GM13976 (cell line): ENCODE measurements at regions of chr7 and their contacts with region 1.

Region 1: DNA sequence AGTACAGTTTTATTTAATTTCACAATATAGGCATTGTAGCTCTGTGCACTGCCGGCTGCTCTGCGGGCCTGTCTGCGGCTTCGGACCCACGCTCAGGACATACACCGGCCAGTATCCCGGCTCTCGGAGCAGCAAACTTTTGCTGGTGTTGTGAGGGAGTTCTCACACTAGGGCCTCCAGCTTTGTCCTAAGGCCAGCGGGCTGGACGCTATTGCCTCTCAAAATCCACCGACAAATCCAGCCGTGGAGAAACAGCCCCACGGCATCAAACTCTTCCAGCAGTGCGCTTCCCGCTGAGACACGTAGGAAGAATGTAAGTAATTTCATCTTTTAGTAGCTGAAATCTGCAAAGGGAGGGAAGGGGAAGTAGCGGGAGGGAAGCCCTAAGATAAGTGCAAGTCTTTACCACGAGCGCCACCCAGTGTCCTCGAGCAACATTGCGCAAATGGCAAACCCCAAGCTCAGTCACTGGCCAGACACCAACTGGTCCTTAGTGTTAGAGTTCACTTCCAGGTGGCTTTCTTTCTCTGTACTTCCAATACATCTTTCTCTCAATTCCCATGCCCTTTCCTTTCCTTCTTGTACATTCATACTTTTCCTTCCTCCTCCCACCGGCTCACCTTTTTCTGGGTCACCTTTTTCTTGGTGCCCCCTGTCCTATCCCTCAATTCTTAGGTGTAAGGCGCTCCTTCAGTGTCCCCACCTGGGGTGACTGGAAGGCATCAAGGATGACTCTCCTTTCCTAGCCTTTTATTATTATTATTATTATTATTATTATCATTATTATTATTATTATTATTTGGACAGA is 3.0 kb upstream of the DLX5 start:
- DNase-seq: peak; percentile 81
- CTCF ChIP-seq: peak; percentile 88

Region 2: GRCh38 chr7:95916573-95917297 is 1110.9 kb before region 1 on chr7:
- in situ Hi-C with region 1: loop called (anchors 25 kb)
- DNase-seq: peak; percentile 46
- CTCF ChIP-seq: peak; percentile 91

Region 3: DNA sequence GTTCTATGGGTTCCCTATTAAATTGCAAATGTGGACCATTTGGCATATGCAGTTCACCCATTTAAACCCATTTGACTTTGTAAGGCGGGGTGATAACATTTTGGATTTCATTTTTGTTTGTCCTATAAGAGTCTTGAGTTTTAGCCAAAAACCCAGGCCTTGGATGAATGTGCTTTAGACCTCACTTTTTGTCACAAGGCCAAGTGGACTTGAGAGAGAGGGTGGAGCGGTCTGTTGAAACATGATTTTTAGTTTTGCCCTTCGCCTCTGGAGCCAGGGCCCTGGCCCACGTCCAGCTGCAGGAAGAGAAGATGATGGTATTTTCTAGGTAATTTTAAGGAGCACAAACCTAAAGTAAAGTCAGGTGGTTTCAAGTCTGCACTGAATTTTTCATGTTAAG is 965.8 kb before region 1 on chr7:
- in situ Hi-C with region 1: loop called (anchors 25 kb)
- DNase-seq: no peak
- CTCF ChIP-seq: no peak

Region 4: GRCh38 chr7:96414931-96415292 is 612.7 kb before region 1 on chr7:
- in situ Hi-C with region 1: loop called (anchors 25 kb)
- DNase-seq: peak; percentile 41
- CTCF ChIP-seq: peak; percentile 65